Activated T-helper 1 cell treated with anti-CD3 and anti-CD28 coated beads, Interleukin-12 subunit alpha, Interleukin-12 subunit beta, Interleukin-2, Interleukin-4 antibody, amounts not matched to agents 30 ng/mL and 10 ng/mL and 1 ng/mL, durations not matched to agents 14 hours and 24 hours and 36 hours (primary cell): ENCODE measurements at regions of chr18 and their contacts with region 1.

Region 1: GRCh38 chr18:43271593-43272432 is 5.5 kb downstream of the SYT4 start:
- DNase-seq: no peak
- H3K4me3 Mint-ChIP-seq: no peak overlapping the region
- H3K27ac Mint-ChIP-seq: no peak overlapping the region
- H3K4me1 Mint-ChIP-seq: no peaks in the 10 kb centered on the region
- H3K27me3 Mint-ChIP-seq: no peaks in the 10 kb centered on the region

Region 2: DNA sequence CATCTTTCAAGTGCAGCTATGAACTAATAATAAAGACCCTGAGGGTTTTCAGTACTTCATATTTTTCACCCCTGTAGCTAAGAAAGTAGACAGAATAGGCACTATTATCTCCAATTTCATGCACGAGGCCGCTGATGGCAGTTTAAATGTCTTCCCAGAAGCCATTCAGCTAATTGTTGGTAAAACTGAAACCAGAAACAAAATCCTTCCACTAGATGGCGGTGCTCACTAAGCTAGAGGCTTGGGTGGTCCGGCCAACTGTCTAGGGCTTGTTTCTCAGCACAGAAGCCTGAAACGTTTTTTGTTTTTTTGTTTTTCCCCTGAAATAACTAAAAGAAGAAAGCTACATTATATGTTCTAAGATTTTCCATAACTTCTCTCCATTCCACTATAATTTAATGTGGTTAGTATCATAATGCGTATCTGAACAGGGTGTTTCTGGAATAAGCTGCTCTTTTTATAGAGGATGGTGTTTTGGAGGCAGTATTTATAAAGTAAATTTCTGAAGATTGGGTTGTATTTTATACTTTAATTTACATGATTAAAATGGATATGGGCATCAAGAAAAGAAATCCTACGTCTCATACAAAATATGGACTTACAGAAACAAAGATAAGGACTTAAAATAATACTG is 1157.4 kb before region 1 on chr18:
- intact Hi-C with region 1: loop called (anchors 1 kb)
- DNase-seq: peak; percentile 38
- H3K4me3 Mint-ChIP-seq: no peak overlapping the region
- H3K27ac Mint-ChIP-seq: peak overlapping the region; percentile 49
- H3K4me1 Mint-ChIP-seq: peaks cover 15% of the 10 kb centered on the region
- H3K27me3 Mint-ChIP-seq: peaks cover 9% of the 10 kb centered on the region

Region 3: DNA sequence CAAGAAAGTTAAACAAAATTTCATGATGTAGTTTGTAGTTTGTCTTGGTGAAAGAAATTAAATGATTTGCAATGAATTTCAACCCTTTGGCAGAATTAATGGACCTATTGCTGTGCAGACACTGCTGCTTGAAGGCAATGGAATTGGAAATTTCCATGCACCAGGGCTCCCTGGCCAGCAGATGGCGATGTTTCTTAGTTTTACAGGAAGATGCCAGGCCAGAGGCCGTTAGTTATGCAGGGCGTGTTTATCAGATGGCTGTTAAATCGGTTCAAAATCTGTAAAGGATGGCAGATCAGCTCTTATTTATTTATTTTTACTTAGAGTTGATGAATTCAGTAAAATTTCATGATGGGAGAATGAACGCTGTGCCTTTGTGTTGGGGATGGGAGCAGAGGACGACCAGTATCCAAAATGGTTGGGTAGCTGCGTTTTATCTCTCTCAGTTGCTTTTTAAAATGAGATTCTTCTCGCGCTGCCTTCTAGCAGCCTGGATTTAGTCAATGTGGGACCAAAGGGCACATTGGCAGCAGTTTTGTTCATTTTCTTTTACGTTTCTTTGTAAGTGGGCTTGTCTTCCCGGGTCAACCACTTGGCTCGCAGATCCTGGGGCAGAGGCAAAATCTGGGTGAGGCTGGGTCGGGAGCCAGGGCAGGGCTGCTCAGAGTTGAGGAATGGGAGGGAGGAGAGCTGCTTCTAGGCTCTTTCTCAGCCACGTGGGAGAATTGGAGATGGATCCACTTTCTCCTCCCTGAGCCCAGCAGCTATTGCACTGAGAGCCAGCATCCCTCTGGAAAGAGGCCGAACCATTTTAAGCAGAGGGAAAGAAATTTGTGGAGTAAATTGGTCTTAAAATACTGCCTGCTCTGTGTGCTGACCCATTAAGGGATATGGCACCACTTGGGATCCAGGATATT is 972.8 kb before region 1 on chr18:
- intact Hi-C with region 1: loop called (anchors 1 kb)
- DNase-seq: peak; percentile 13
- H3K4me3 Mint-ChIP-seq: no peak overlapping the region
- H3K27ac Mint-ChIP-seq: no peak overlapping the region
- H3K4me1 Mint-ChIP-seq: no peaks in the 10 kb centered on the region
- H3K27me3 Mint-ChIP-seq: no peaks in the 10 kb centered on the region

Region 4: DNA sequence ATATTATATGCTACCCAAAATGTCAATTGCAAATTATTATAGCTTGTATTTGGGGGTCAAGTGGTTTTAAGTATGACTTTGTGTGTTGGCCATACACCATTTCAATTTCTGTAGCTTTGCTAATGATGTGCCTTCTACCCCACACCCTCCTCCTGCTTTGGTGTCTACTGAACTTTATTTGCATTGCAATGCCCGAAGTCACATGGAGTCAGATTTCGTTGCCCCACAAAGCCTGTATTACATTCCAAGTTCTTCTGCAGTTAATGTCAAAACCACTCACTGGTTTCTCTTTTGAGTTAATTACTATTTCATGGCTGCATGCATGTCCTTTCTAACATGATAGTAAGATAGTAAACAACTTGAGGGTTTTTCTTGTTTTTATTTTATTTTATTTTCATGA is 685.2 kb before region 1 on chr18:
- intact Hi-C with region 1: loop called (anchors 10 kb)
- DNase-seq: no peak
- H3K4me3 Mint-ChIP-seq: no peak overlapping the region
- H3K27ac Mint-ChIP-seq: no peak overlapping the region
- H3K4me1 Mint-ChIP-seq: no peaks in the 10 kb centered on the region
- H3K27me3 Mint-ChIP-seq: no peaks in the 10 kb centered on the region